BJ (cell line): ENCODE measurements at regions of chr1 and their contacts with region 1.

Region 1: DNA sequence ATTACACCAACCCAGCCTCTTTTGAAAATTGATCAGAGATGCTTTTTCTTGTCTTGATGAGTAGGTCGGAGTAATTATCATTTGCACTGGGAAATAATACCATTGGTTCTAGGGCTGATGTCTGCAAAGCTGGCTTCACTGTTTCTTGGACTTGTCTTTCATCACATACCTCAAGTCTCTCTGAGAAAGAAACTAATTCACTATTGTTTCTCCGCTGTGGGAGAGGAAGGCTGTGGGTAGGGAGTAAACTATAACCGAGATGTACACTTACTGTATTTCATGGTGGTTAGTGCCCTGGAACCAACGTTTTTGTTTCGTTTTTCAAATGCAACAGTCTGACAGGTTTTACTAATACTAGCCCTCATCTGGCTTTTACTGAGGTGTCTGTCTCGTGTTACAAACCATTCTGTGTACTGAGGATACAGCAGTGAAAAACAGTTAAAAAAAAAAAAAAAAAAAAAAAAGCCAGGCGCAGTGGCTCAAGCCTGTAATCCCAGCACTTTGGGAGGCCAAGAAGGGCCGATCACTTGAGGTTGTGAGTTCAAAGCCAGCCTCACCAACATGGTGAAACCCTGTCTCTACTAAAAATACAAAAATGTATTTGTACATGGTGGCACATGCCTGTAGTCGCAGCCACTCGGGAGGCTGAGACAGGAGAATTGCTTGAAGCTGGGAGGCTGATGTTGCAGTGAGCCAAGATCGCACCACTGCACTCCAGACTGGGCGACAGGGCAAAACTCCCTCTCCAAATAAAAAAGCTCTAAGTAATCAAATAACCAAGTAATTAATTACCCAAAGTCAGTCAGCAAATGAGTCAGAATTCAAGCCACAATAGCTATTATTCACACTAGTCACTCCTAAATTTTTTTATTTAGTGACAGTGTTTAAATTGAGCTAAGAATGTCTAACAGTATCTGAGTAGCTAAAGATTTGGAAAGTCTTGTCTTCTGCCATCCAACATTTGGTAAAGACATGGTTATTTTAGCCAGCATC is 23.3 kb downstream of the TOMM20 start:
- DNase-seq: no peak
- H3K4me3 ChIP-seq: no peak overlapping the region
- H3K27me3 ChIP-seq: no peaks in the 10 kb centered on the region
- CTCF ChIP-seq: no peak

Region 2: GRCh38 chr1:235093696-235094592 is 11.4 kb before region 1 on chr1:
- CTCF ChIA-PET with region 1: interaction called, 10 read pairs
- POLR2A ChIA-PET with region 1: no interaction called
- DNase-seq: no peak
- H3K4me3 ChIP-seq: no peak overlapping the region
- H3K27me3 ChIP-seq: no peaks in the 10 kb centered on the region; the same call in 1 of the 2 replicates
- CTCF ChIP-seq: peak; percentile 95

Region 3: DNA sequence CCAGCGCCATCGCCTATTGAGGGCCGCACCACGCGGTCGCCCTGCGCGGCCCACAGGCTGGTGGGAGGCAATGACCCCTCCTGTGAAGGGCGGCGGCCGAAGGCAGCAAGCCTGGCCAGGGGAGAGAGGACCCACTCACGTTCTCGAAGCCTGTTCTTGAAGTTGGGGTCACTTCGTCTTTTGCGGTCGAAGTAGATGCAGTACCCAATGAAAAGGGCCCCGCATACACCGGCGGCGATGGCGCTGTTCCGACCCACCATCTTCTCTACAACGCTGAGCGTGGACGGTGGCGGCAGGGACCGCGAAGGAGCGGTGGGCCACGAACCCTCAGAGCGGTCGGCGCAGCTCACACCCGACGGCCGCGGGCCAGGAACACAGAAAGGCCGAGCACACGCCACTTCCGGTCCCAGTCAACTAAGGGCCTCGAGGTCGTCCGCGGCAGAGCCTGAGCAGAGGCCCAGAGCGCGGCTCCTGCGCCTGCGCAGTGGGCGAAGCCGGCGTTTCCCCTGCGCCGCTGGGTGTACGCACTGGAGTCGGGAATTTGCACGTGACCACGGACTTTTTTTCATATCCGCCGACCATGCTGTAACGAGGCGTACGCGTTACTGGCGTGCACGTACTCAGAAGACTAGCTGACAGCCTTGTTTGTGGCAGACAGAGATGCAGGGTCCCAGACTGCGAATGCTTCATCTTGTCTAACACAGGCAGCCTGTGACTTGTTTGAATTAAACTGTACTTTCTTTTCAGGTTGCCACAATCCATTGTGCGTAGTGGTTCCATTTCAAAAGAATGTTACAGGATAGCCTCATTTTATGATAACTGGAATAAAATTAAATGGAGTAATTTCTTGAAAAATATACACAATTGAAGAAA is 23.3 kb after region 1 on chr1 and contains the start of gene TOMM20:
- CTCF ChIA-PET with region 1: interaction called, 14 read pairs
- POLR2A ChIA-PET with region 1: interaction called, 6 read pairs
- DNase-seq: peak; percentile 89
- H3K4me3 ChIP-seq: peak within 1 kb of the TSS; percentile 96
- H3K27me3 ChIP-seq: no peaks in the 10 kb centered on the region
- CTCF ChIP-seq: no peak
- polyA plus RNA-seq, gene TOMM20: 53.7 and 56.8 TPM in 2 replicates